ENCODE measurements at regions of chr20 and their contacts with region 1.

Region 1: GRCh38 chr20:45011108-45011526 is 44.8 kb downstream of the STK4 start:
- DNase-seq: no peak
- H3K4me3 ChIP-seq: no peak overlapping the region
- H3K27ac ChIP-seq: no peak overlapping the region
- H3K4me1 ChIP-seq: peaks cover 24% of the 10 kb centered on the region
- H3K27me3 ChIP-seq: no peaks in the 10 kb centered on the region
- CTCF ChIP-seq: peak; percentile 36 to 63 (median 58)
- POLR2A ChIP-seq: no peak

Region 2: GRCh38 chr20:45095753-45096371 is 84.7 kb after region 1 on chr20:
- intact Hi-C with region 1: loop called (anchors 10 kb)
- DNase-seq: no peak
- H3K4me3 ChIP-seq: no peak overlapping the region
- H3K27ac ChIP-seq: no peak overlapping the region
- H3K4me1 ChIP-seq: peaks cover 4% of the 10 kb centered on the region
- H3K27me3 ChIP-seq: peaks cover 6% of the 10 kb centered on the region
- CTCF ChIP-seq: peak in 1 of 3 experiments; percentile 38
- POLR2A ChIP-seq: no peak

Region 3: GRCh38 chr20:45254869-45255266 is 243.8 kb after region 1 on chr20:
- intact Hi-C with region 1: no loop called
- DNase-seq: peak in 1 of 2 donors; percentile 62
- H3K4me3 ChIP-seq: no peak overlapping the region
- H3K27ac ChIP-seq: peak overlapping the region; percentile 37
- H3K4me1 ChIP-seq: peaks cover 18% of the 10 kb centered on the region
- H3K27me3 ChIP-seq: no peaks in the 10 kb centered on the region
- CTCF ChIP-seq: no peak
- POLR2A ChIP-seq: no peak